Activated CD4-positive, alpha-beta memory T cell treated with anti-CD3 and anti-CD28 coated beads, Interleukin-2, amount 10 ng/mL, durations not matched to agents 7 days and 5 days (primary cell): ENCODE measurements at regions of chr9 and their contacts with region 1.

Region 1: DNA sequence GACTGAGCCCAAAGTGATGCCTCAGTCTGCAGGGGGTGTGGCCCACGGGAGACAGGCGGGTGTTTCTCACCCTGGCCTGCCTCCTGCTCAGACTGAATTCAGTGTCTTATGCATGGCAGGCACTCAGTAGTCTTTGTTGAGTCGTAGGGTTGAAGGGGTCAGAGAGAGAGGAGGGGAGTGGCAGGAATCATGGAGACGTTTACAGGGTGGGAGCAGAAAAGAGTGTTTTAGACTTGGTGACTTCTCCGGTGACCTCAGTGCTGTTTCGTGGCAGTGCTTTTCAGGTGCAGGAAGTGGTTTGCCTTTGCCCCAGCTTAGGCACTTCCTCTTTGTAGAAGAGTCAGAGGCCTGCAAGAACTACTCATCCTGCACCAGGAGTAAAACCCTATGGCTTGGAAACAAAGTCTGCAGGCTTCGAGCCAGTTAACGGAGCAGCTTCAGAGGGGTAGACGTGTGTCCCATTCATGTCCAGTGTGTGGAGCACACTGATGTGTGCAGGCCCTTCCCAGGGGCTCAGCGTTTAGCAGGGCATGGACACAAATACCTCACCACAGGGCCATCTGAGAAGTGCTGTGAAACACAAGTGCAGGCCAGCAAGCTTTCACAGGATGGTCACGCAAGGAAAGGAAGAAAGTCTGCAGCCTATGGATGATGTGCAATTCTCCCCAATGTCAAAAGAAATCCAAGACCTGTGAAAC is 24.5 kb upstream of the SEMA4D start:
- DNase-seq: peak; percentile 88
- H3K4me3 Mint-ChIP-seq: peak overlapping the region; percentile 61
- H3K27ac Mint-ChIP-seq: peak overlapping the region; percentile 100
- H3K4me1 Mint-ChIP-seq: peaks cover 92% of the 10 kb centered on the region
- H3K27me3 Mint-ChIP-seq: no peaks in the 10 kb centered on the region

Region 2: GRCh38 chr9:89410641-89411350 is 111.6 kb before region 1 on chr9:
- CTCF ChIA-PET with region 1: no interaction called
- POLR2A ChIA-PET with region 1: interaction called, 23 read pairs
- DNase-seq: peak; percentile 56
- H3K4me3 Mint-ChIP-seq: peak overlapping the region; percentile 58
- H3K27ac Mint-ChIP-seq: peak overlapping the region; percentile 93
- H3K4me1 Mint-ChIP-seq: peaks cover 99% of the 10 kb centered on the region
- H3K27me3 Mint-ChIP-seq: no peaks in the 10 kb centered on the region

Region 3: DNA sequence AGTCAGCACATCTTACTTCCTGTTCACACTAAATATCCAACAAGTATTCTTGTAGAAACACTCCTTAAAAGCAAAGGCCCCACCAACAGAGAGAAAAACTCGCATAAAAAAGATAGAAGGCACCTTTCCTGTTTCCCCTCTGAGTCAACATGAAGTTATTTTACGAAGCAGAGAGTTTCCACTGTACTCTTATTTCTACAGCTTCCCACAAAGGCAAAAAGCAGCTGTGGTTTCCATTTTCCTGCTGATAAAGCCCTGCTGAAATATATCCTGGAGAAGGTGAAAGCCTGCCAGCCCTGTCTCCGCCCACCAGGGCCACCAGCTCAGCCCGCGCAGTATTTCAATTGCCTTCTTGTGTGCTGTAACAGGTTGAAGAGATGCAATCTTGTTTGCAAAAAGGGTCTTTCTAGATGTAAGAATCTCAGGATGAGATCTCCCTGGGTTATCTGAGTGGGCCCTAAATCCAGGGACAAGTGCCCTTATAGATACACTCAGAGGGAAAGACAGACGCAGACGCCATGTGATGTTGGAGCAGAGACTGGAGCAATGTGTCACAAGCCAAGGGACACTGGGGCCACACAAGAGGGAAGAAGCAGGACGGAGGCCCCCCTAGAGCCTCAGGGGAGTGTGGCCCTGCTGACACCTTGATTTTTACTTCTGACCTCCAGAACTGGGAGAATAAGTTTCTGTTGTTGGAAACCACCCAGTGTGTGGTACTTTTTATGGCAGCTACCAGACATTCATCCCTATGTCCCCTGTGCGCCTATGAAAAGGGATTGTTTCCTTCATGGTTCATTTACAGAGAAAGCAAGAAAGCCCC is 44.4 kb before region 1 on chr9:
- CTCF ChIA-PET with region 1: interaction called, 3 read pairs
- POLR2A ChIA-PET with region 1: interaction called, 18 read pairs
- DNase-seq: peak; percentile 66
- H3K4me3 Mint-ChIP-seq: peak overlapping the region; percentile 60
- H3K27ac Mint-ChIP-seq: peak overlapping the region; percentile 87
- H3K4me1 Mint-ChIP-seq: peaks cover 88% of the 10 kb centered on the region
- H3K27me3 Mint-ChIP-seq: no peaks in the 10 kb centered on the region

Region 4: DNA sequence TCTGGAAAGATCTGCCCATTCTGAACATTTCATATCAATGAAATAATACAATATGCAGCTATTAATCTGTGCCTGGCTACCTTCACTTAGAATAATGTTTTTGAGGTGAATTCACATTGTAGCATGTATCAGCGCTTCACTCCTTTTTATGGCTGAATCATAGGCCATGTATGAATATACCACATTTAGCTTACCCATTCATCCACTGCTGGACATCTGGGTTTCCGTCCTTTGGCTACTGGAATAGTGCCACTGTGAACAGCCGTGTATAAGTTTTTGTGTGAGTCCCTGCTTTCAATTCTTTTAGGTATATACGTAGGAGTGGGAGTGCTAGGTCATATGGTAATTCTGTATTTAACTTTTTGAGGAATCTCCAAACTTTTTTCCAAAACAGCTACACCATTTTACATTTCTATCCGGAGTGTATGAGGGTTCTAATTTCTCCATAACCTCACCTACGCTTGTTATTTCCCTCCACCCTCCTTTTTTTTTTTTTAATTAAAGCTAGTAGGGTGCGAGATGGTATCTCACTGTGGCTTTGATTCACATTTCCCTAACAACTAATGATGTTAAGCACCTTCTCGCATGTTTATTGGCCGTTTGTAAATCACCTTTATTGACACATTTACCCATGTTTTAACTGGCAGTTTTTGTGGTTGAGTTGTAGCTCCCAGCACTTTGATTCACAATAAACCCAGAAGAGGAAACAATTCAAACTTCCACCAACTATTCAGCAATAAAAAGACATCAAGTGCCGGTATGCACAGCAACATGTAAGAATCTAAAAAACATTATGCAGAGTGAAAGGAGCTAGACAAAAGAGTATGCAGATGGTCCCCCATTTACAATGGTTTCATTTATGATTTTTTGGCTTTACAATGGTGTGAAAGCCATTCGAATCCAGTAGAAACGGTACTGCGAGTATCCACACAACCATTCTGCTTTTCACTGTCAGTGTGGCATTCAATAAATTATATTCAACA is 32.6 kb before region 1 on chr9:
- CTCF ChIA-PET with region 1: interaction called, 3 read pairs
- POLR2A ChIA-PET with region 1: interaction called, 19 read pairs
- DNase-seq: no peak
- H3K4me3 Mint-ChIP-seq: peak overlapping the region; percentile 61
- H3K27ac Mint-ChIP-seq: peak overlapping the region; percentile 87
- H3K4me1 Mint-ChIP-seq: peaks cover 95% of the 10 kb centered on the region
- H3K27me3 Mint-ChIP-seq: no peaks in the 10 kb centered on the region

Region 5: DNA sequence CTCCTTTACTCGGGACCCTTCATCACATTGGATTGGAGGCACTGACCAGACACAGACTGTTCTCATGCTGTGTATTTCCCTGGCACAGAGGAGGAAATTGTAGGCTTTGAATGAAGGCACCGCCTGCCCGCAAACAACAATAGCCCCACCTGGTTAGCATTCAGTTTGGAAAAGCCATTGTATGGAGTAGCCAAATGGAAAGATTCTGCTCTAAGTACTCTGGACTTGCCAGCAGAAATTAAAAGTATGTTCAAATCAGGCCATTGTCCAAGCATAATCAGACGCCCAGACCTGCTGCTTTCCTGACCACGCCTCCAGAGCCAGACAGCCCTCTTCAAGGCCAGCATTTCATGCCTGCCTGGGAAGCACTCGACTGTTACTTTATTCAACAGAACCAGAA is 16.5 kb before region 1 on chr9:
- CTCF ChIA-PET with region 1: interaction called, 4 read pairs
- POLR2A ChIA-PET with region 1: interaction called, 77 read pairs
- DNase-seq: no peak
- H3K4me3 Mint-ChIP-seq: no peak overlapping the region
- H3K27ac Mint-ChIP-seq: no peak overlapping the region
- H3K4me1 Mint-ChIP-seq: peaks cover 76% of the 10 kb centered on the region
- H3K27me3 Mint-ChIP-seq: no peaks in the 10 kb centered on the region

Region 6: DNA sequence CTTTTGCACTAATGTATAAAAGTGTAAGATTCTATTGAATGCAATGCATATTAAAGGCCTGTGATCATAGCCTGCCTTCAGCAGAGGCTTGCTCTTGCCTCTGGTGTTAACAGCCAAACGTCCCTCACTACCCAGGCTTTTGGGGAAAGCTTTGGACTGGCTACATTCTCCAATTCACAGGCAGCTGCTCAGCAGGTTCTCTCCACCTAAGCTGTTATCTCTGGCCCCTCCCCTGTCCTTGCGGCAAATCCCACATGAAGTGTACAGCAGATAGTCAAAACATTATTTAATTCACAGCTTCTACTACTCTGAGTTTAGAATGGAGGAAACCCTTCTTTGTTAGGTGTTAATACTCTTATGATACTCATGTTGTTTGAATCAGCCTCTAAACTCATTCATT is 36.5 kb after region 1 on chr9:
- CTCF ChIA-PET with region 1: no interaction called
- POLR2A ChIA-PET with region 1: no interaction called
- DNase-seq: no peak
- H3K4me3 Mint-ChIP-seq: no peak overlapping the region
- H3K27ac Mint-ChIP-seq: no peak overlapping the region
- H3K4me1 Mint-ChIP-seq: peaks cover 14% of the 10 kb centered on the region
- H3K27me3 Mint-ChIP-seq: peaks cover 27% of the 10 kb centered on the region